Caco-2 (cell line): ENCODE measurements at regions of chr3 and their contacts with region 1.

Region 1: GRCh38 chr3:111577794-111578685 is 17.1 kb downstream of the ZBED2 start:
- DNase-seq: peak in 1 of 2 experiments; percentile 48
- H3K4me3 ChIP-seq: no peak overlapping the region
- H3K4me3 Mint-ChIP-seq: no peak overlapping the region
- H3K27ac Mint-ChIP-seq: no peak overlapping the region
- H3K4me1 ChIP-seq: peaks cover 20% of the 10 kb centered on the region
- H3K4me1 Mint-ChIP-seq: peaks cover 30% of the 10 kb centered on the region
- H3K27me3 ChIP-seq: no peaks in the 10 kb centered on the region
- H3K27me3 Mint-ChIP-seq: no peaks in the 10 kb centered on the region
- CTCF ChIP-seq: peak in 1 of 2 experiments; percentile 63

Region 2: DNA sequence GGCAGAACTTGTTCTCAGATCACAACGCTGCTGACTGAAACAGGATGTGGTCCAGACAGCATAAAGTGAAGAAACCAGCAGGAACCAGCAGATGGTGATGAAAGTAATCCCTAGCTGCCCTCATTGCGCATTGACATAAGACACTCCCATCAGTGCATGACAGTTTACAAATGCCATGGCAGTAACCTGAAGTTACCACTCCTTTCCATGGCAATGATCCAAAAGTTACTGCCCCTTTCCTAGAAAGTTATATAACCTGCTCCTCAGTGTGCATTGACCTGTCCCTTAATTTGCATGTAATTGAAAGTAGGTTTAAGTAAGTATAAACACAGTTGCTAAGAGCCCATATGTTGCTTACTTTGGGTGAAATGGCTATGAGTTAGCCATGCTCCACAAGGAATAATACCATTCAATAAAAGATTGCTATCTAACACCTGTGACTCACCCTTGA is 185.1 kb before region 1 on chr3:
- CTCF ChIA-PET with region 1: no interaction called
- POLR2A ChIA-PET with region 1: no interaction called
- intact Hi-C with region 1: no loop called
- DNase-seq: no peak
- H3K4me3 ChIP-seq: no peak overlapping the region
- H3K4me3 Mint-ChIP-seq: no peak overlapping the region
- H3K27ac Mint-ChIP-seq: no peak overlapping the region
- H3K4me1 ChIP-seq: no peaks in the 10 kb centered on the region
- H3K4me1 Mint-ChIP-seq: no peaks in the 10 kb centered on the region
- H3K27me3 ChIP-seq: no peaks in the 10 kb centered on the region
- H3K27me3 Mint-ChIP-seq: no peaks in the 10 kb centered on the region
- CTCF ChIP-seq: no peak

Region 3: GRCh38 chr3:111621535-111621934 is 43.5 kb after region 1 on chr3:
- CTCF ChIA-PET with region 1: interaction called, 3 read pairs
- POLR2A ChIA-PET with region 1: no interaction called
- intact Hi-C with region 1: loop called (anchors 1 kb)
- DNase-seq: peak; percentile 60 to 63
- H3K4me3 ChIP-seq: no peak overlapping the region
- H3K4me3 Mint-ChIP-seq: no peak overlapping the region
- H3K27ac Mint-ChIP-seq: no peak overlapping the region
- H3K4me1 ChIP-seq: no peaks in the 10 kb centered on the region
- H3K4me1 Mint-ChIP-seq: no peaks in the 10 kb centered on the region
- H3K27me3 ChIP-seq: no peaks in the 10 kb centered on the region
- H3K27me3 Mint-ChIP-seq: peaks cover 6% of the 10 kb centered on the region
- CTCF ChIP-seq: peak; percentile 56 to 60

Region 4: GRCh38 chr3:111668912-111669488 is 91.0 kb after region 1 on chr3:
- CTCF ChIA-PET with region 1: interaction called, 11 read pairs
- POLR2A ChIA-PET with region 1: no interaction called
- intact Hi-C with region 1: loop called (anchors 1 kb)
- DNase-seq: peak in 1 of 2 experiments; percentile 30
- H3K4me3 ChIP-seq: no peak overlapping the region
- H3K4me3 Mint-ChIP-seq: no peak overlapping the region
- H3K27ac Mint-ChIP-seq: no peak overlapping the region
- H3K4me1 ChIP-seq: peaks cover 4% of the 10 kb centered on the region; the same call in 1 of the 2 replicates
- H3K4me1 Mint-ChIP-seq: peaks cover 18% of the 10 kb centered on the region
- H3K27me3 ChIP-seq: no peaks in the 10 kb centered on the region
- H3K27me3 Mint-ChIP-seq: no peaks in the 10 kb centered on the region
- CTCF ChIP-seq: peak; percentile 46 to 70

Region 5: GRCh38 chr3:111691293-111691909 is 113.4 kb after region 1 on chr3:
- CTCF ChIA-PET with region 1: interaction called, 20 read pairs
- POLR2A ChIA-PET with region 1: interaction called, 3 read pairs
- intact Hi-C with region 1: loop called (anchors 1 kb)
- DNase-seq: peak in 1 of 2 experiments; percentile 36
- H3K4me3 ChIP-seq: no peak overlapping the region
- H3K4me3 Mint-ChIP-seq: no peak overlapping the region
- H3K27ac Mint-ChIP-seq: no peak overlapping the region
- H3K4me1 ChIP-seq: peaks cover 38% of the 10 kb centered on the region
- H3K4me1 Mint-ChIP-seq: peaks cover 33% of the 10 kb centered on the region
- H3K27me3 ChIP-seq: no peaks in the 10 kb centered on the region
- H3K27me3 Mint-ChIP-seq: no peaks in the 10 kb centered on the region
- CTCF ChIP-seq: peak; percentile 45 to 62